Testis (tissue), 5 donors: ENCODE measurements at regions of chr1 and their contacts with region 1.

Region 1: GRCh38 chr1:84753516-84754385 is 63.5 kb upstream of the SSX2IP start:
- DNase-seq: peak; percentile 85
- H3K4me3 ChIP-seq: peak overlapping the region in 1 of 2 donors; percentile 29
- H3K27ac ChIP-seq: no peak overlapping the region
- H3K4me1 ChIP-seq: no peaks in the 10 kb centered on the region
- H3K27me3 ChIP-seq: no peaks in the 10 kb centered on the region
- CTCF ChIP-seq: peak; percentile 76 to 92 (median 80)
- POLR2A ChIP-seq: no peak

Region 2: GRCh38 chr1:84427520-84428188 is 326.1 kb before region 1 on chr1:
- intact Hi-C with region 1: loop called (anchors 10 kb)
- DNase-seq: no peak
- H3K4me3 ChIP-seq: no peak overlapping the region
- H3K27ac ChIP-seq: no peak overlapping the region
- H3K4me1 ChIP-seq: no peaks in the 10 kb centered on the region
- H3K27me3 ChIP-seq: no peaks in the 10 kb centered on the region
- CTCF ChIP-seq: no peak
- POLR2A ChIP-seq: no peak

Region 3: DNA sequence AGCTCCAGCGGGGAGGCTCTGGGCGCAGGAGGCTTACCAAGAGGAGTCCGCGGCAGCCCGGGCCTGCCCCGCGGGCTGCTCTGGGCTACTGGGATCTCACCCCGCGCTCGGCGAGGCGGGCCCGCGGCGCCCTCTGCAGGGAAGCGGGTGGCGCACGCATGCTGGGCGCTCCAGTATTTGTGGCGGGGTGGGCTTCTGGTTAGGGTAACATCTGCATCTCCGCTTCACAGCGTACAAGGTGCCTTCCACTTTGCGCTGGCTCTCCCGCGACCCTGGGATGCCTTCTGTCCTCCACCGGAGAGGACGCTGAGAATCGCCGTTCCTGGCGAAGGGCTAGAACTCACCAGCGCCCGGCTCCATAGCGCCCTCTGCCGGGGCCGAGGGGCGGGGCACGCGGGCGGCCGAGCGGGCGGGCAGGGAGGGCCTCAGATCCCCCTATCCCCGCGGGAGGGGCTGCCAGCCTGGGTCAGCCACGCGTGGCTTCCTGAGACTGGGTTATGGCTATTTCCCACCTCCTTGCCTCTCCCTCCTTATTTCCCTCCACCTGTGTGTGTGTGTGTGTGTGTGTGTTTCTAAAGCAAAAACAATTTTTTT is 132.9 kb before region 1 on chr1:
- intact Hi-C with region 1: loop called (anchors 10 kb)
- DNase-seq: peak; percentile 81
- H3K4me3 ChIP-seq: peak overlapping the region; percentile 65 to 69
- H3K27ac ChIP-seq: peak overlapping the region; percentile 42 to 76
- H3K4me1 ChIP-seq: no peaks in the 10 kb centered on the region
- H3K27me3 ChIP-seq: no peaks in the 10 kb centered on the region
- CTCF ChIP-seq: peak; percentile 74 to 96 (median 80)
- POLR2A ChIP-seq: no peak